ENCODE measurements at regions of chr18 and their contacts with region 1.

Region 1: GRCh38 chr18:3665780-3666525 is 216.0 kb downstream of the TGIF1 start:
- DNase-seq: peak; percentile 82
- H3K4me3 ChIP-seq: peak overlapping the region in 1 of 2 experiments; percentile 41; a peak in 1 of 4 replicates
- H3K27ac ChIP-seq: peak overlapping the region; percentile 37 to 53; a peak in 2 of 4 replicates
- H3K4me1 ChIP-seq: peaks cover 5 to 18% of the 10 kb centered on the region in 2 experiments; a peak in 2 of 4 replicates
- H3K27me3 ChIP-seq: no peaks in the 10 kb centered on the region
- CTCF ChIP-seq: peak; percentile 96
- EP300 ChIP-seq: no peak
- RAD21 ChIP-seq: peak; percentile 98

Region 2: GRCh38 chr18:3245853-3246634 is 419.9 kb before region 1 on chr18:
- CTCF ChIA-PET with region 1: interaction called, 11 read pairs
- POLR2A ChIA-PET with region 1: no interaction called
- DNase-seq: peak; percentile 77
- H3K4me3 ChIP-seq: peak overlapping the region; percentile 30 to 56
- H3K27ac ChIP-seq: peak overlapping the region; percentile 94 to 98
- H3K4me1 ChIP-seq: peaks cover 10 to 11% of the 10 kb centered on the region in 2 experiments; a peak in 3 of 4 replicates
- H3K27me3 ChIP-seq: no peaks in the 10 kb centered on the region
- CTCF ChIP-seq: peak; percentile 90
- EP300 ChIP-seq: no peak
- RAD21 ChIP-seq: peak; percentile 98

Region 3: DNA sequence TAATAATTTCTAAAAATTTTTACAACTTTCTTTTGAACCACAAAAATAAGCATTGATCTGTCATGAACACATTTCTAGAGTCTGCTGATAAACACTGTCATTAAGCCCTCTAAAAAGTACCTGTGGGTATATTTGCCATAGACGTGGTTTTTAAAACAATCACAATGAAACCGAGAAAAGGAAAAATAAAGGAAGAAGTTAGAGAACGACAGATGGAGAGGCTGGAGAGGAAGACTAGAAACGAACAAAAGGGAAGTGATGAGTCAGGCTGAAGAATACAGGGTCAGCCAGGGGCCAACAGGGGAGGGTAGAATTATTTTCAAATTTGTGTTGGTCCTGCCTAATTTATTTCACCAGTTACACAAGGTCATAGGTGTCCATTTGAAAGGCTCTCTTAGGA is 342.1 kb before region 1 on chr18:
- CTCF ChIA-PET with region 1: interaction called, 11 read pairs
- POLR2A ChIA-PET with region 1: no interaction called
- DNase-seq: no peak
- H3K4me3 ChIP-seq: no peak overlapping the region
- H3K27ac ChIP-seq: peak overlapping the region; percentile 16 to 54; a peak in 3 of 4 replicates
- H3K4me1 ChIP-seq: peaks cover 15 to 37% of the 10 kb centered on the region in 2 experiments; a peak in 3 of 4 replicates
- H3K27me3 ChIP-seq: no peaks in the 10 kb centered on the region
- CTCF ChIP-seq: no peak
- EP300 ChIP-seq: no peak
- RAD21 ChIP-seq: no peak

Region 4: DNA sequence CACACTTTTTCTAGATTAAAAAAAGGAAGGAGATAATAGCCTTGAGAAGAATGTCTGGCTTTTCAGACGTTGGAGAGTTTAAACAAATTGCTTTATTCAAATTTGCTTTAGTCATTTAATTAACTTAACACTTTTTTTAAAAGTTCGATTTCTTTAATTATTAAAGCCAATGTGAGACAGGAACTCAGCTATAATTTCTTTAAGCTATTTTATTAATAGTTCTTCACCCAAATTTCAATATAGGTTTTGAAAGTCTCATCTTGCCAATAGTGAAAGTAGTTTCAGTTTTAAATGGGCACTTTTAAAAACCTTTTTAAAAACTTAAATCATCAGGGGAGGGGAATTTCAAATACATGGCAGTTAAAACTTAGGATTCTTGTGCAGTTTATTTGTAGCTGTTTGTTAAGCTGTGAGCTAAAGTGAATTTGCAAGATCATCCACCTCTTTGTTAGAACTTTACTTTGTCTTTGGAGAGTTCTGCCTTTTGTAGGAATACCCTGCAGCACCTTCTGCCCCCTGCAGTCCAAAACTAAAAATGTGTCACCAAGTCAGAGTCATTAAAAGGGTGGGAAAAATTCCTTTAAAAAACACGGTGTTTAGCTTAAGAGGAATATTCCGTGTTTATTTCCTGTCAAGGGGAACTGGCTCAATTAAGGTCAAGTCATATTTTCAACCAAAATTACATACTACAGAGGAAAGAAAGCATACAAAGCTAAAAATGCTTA is 211.4 kb before region 1 on chr18:
- CTCF ChIA-PET with region 1: interaction called, 15 read pairs
- POLR2A ChIA-PET with region 1: no interaction called
- DNase-seq: peak; percentile 51
- H3K4me3 ChIP-seq: peak overlapping the region; percentile 74 to 93
- H3K27ac ChIP-seq: peak overlapping the region; percentile 76 to 99
- H3K4me1 ChIP-seq: peaks cover 27 to 38% of the 10 kb centered on the region in 2 experiments; a peak in 3 of 4 replicates
- H3K27me3 ChIP-seq: no peaks in the 10 kb centered on the region
- CTCF ChIP-seq: peak; percentile 83
- EP300 ChIP-seq: no peak
- RAD21 ChIP-seq: peak; percentile 61

Region 5: DNA sequence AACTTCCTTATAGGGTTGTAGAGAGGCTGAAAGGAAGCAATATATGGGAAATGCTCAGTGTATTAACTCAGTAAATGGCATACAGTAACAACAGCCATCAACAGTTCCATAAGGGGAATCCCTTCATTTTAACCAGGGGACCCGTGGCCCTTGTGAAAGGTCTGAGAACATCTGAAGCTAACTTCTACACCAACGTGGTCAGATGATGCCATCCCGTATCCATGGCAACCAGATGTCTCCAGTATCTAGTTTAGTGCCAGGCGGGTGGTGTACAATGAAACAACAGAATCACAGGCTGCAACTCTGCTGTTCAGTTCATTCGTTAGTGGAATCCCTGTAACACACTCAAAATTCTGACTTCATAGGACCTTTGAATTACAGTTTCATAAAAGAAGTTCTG is 53.6 kb before region 1 on chr18:
- CTCF ChIA-PET with region 1: interaction called, 13 read pairs
- POLR2A ChIA-PET with region 1: no interaction called
- DNase-seq: no peak
- H3K4me3 ChIP-seq: no peak overlapping the region
- H3K27ac ChIP-seq: no peak overlapping the region; a peak in 1 of 4 replicates
- H3K4me1 ChIP-seq: peaks cover 4 to 7% of the 10 kb centered on the region in 2 experiments; a peak in 2 of 4 replicates
- H3K27me3 ChIP-seq: no peaks in the 10 kb centered on the region
- CTCF ChIP-seq: no peak
- EP300 ChIP-seq: no peak
- RAD21 ChIP-seq: no peak

Region 6: DNA sequence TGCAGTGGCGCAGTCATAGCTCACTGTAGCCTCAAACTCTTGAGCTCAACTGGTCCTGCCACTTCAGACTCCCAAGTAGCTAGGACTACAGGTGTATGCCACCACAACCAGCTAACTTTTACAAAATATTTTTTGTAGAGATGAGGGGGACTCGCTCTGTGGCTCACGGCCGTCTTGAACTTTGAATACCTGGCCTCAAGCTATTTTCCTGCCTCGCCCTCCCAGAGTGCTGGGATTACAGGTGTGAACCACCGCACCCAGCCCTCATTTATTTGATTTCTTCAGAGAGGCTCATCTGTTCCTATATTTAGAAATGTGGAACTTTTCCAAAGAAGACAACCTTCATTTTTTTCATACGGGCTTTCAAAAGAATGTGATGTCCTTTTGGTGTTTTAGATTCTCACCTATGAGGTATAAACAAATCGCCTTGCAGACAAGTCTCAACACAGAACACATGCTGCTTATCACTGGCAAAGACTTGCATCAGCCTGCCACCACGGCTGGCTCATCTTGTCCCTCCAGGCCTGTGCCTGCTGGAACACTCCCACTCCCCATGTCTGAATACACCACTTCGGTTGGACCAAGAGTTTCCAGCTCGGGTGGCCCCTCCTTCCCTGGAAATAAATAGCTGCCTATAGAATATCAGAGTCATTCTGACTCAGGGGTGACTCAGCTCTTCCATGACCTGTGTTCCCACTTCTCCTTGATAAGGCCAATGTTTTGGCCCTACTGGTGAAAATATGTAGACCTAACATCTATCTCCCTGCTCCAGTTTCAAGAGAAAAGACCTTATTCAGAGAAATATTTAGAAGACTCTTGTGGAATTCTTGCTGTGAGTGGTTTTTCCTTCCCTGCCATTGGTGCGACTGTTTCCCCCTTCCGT is 13.3 kb before region 1 on chr18:
- CTCF ChIA-PET with region 1: interaction called, 10 read pairs
- POLR2A ChIA-PET with region 1: no interaction called
- DNase-seq: peak; percentile 45
- H3K4me3 ChIP-seq: peak overlapping the region in 1 of 2 experiments; percentile 40; a peak in 1 of 4 replicates
- H3K27ac ChIP-seq: peak overlapping the region; percentile 62 to 97; a peak in 3 of 4 replicates
- H3K4me1 ChIP-seq: peaks cover 15 to 29% of the 10 kb centered on the region in 2 experiments; a peak in 3 of 4 replicates
- H3K27me3 ChIP-seq: no peaks in the 10 kb centered on the region
- CTCF ChIP-seq: peak; percentile 40
- EP300 ChIP-seq: peak in 1 of 2 experiments; percentile 82; a peak in 2 of 4 replicates
- RAD21 ChIP-seq: no peak

Region 7: GRCh38 chr18:3722320-3723000 is 56.5 kb after region 1 on chr18:
- CTCF ChIA-PET with region 1: no interaction called
- POLR2A ChIA-PET with region 1: no interaction called
- DNase-seq: no peak
- H3K4me3 ChIP-seq: no peak overlapping the region
- H3K27ac ChIP-seq: no peak overlapping the region
- H3K4me1 ChIP-seq: peaks cover 0 to 17% of the 10 kb centered on the region in 2 experiments; a peak in 1 of 4 replicates
- H3K27me3 ChIP-seq: peaks cover 31% of the 10 kb centered on the region
- CTCF ChIP-seq: no peak
- EP300 ChIP-seq: no peak
- RAD21 ChIP-seq: no peak